IMR-90 (cell line): ENCODE measurements at regions of chr3 and their contacts with region 1.

Region 1: GRCh38 chr3:48318783-48319468 is 14.5 kb downstream of the SPINK8 start:
- DNase-seq: no peak
- ATAC-seq: no peak
- H3K4me3 ChIP-seq: no peak overlapping the region
- H3K27ac ChIP-seq: no peak overlapping the region
- H3K4me1 ChIP-seq: no peaks in the 10 kb centered on the region
- H3K27me3 ChIP-seq: peaks cover 12% of the 10 kb centered on the region
- CTCF ChIP-seq: no peak
- POLR2A ChIP-seq: no peak
- RAD21 ChIP-seq: no peak

Region 2: GRCh38 chr3:48338635-48339034 is 19.7 kb after region 1 on chr3:
- CTCF ChIA-PET with region 1: no interaction called
- POLR2A ChIA-PET with region 1: interaction called, 10 read pairs
- dilution Hi-C with region 1: no loop called
- in situ Hi-C with region 1: no loop called
- intact Hi-C with region 1: no loop called
- DNase-seq: no peak
- ATAC-seq: no peak
- H3K4me3 ChIP-seq: no peak overlapping the region
- H3K27ac ChIP-seq: no peak overlapping the region
- H3K4me1 ChIP-seq: peaks cover 3% of the 10 kb centered on the region; the same call in 1 of the 2 replicates
- H3K27me3 ChIP-seq: peaks cover 4% of the 10 kb centered on the region
- CTCF ChIP-seq: no peak
- POLR2A ChIP-seq: no peak
- RAD21 ChIP-seq: no peak

Region 3: GRCh38 chr3:48472915-48473616 is 154.1 kb after region 1 on chr3:
- CTCF ChIA-PET with region 1: no interaction called
- POLR2A ChIA-PET with region 1: no interaction called
- dilution Hi-C with region 1: no loop called
- in situ Hi-C with region 1: no loop called
- intact Hi-C with region 1: no loop called
- DNase-seq: peak; percentile 91
- ATAC-seq: peak; percentile 92
- H3K4me3 ChIP-seq: peak overlapping the region; percentile 68
- H3K27ac ChIP-seq: peak overlapping the region; percentile 94
- H3K4me1 ChIP-seq: peaks cover 6% of the 10 kb centered on the region
- H3K27me3 ChIP-seq: no peaks in the 10 kb centered on the region
- CTCF ChIP-seq: peak; percentile 30; the same call in 1 of the 2 replicates
- POLR2A ChIP-seq: peak; percentile 91
- RAD21 ChIP-seq: no peak

Region 4: GRCh38 chr3:48716982-48717746 is 398.2 kb after region 1 on chr3 and contains the start of gene IP6K2:
- CTCF ChIA-PET with region 1: no interaction called
- POLR2A ChIA-PET with region 1: no interaction called
- dilution Hi-C with region 1: no loop called
- in situ Hi-C with region 1: no loop called
- intact Hi-C with region 1: no loop called
- DNase-seq: peak; percentile 97
- ATAC-seq: peak; percentile 97
- H3K4me3 ChIP-seq: peak within 1 kb of the TSS; percentile 79
- H3K27ac ChIP-seq: peak within 1 kb of the TSS; percentile 78
- H3K4me1 ChIP-seq: peaks cover 8% of the 10 kb centered on the region
- H3K27me3 ChIP-seq: no peaks in the 10 kb centered on the region
- CTCF ChIP-seq: no peak
- POLR2A ChIP-seq: peak; percentile 98
- RAD21 ChIP-seq: no peak
- total RNA-seq, gene IP6K2: 73.7 and 76.9 TPM in 2 replicates